Dendritic cell treated with granulocyte-macrophage colony-stimulating factor and Interleukin-4, amounts not matched to agents 40 ng/mL and 50 ng/mL, for 4 days (primary cell): ENCODE measurements at regions of chr1 and their contacts with region 1.

Region 1: DNA sequence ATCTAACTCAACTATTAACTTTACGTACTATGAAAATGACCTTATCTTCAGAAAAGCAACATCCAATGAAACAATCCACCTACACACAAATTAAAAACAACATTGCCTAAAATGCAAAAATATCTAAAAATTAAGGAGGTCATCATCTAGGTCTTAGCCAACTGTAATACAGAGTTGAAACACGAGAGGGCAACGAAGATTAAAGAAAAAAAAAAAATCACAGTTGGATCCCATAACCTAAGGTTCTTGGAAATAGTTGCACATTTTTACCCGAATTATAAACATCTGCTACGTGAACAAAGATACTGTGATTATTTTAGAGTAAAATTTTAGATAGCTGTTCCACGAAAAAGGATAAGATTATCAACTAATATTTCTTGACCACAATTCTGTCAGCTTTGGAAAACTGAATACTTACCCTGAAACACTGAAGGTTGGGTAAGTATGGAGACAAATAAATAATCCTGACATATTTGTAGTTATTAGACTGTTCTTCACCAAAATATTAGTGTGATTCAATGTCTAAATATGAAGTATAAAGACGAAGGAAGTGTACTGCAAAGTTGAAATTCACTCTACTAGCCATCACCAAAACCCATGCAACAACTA is 88.0 kb upstream of the AK4 start:
- H3K4me3 Mint-ChIP-seq: no peak overlapping the region
- H3K27ac Mint-ChIP-seq: no peak overlapping the region
- H3K4me1 Mint-ChIP-seq: peaks cover 55% of the 10 kb centered on the region
- H3K27me3 Mint-ChIP-seq: no peaks in the 10 kb centered on the region

Region 2: DNA sequence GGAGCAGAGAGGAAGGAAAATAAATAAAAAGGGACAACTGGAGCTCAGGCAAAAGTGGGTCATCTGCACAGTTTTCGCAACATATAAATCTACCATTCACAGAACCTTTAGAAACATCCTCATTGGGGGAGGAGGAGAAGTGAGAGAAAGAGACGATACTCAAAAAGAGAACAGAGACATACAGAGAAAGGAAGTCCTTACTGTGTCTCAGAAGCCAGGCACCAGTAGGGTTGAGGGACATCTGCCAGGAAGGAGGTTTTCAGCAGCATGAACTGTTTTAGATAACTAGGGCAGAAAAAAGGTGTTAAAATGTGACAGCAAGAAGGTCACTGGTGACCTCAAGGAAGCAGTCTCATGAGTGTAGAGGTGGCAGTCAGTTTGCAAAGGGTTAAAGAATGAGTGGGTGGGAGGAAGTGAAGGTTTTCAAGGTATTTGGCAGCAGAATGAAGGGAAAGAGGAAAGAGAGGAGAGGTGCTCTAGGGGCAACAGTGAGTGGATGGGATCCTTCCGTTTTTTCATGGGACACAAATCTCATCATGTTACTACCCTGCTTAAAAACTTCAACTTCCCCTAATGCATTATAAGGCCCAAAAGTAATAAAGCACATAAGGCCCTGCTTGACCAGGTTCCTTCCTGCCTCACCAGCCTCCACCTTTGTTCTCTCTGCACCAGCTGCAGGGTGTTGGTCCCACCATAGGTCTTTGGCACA is 103.1 kb before region 1 on chr1:
- intact Hi-C with region 1: loop called (anchors 5 kb)
- H3K4me3 Mint-ChIP-seq: peak overlapping the region; percentile 32
- H3K27ac Mint-ChIP-seq: no peak overlapping the region
- H3K4me1 Mint-ChIP-seq: peaks cover 48% of the 10 kb centered on the region
- H3K27me3 Mint-ChIP-seq: no peaks in the 10 kb centered on the region

Region 3: GRCh38 chr1:65020774-65021173 is 39.3 kb before region 1 on chr1:
- intact Hi-C with region 1: no loop called
- H3K4me3 Mint-ChIP-seq: no peak overlapping the region
- H3K27ac Mint-ChIP-seq: no peak overlapping the region
- H3K4me1 Mint-ChIP-seq: peaks cover 14% of the 10 kb centered on the region
- H3K27me3 Mint-ChIP-seq: no peaks in the 10 kb centered on the region

Region 4: GRCh38 chr1:65075123-65075976 is 15.3 kb after region 1 on chr1:
- intact Hi-C with region 1: loop called (anchors 2 kb)
- H3K4me3 Mint-ChIP-seq: no peak overlapping the region
- H3K27ac Mint-ChIP-seq: no peak overlapping the region
- H3K4me1 Mint-ChIP-seq: peaks cover 26% of the 10 kb centered on the region
- H3K27me3 Mint-ChIP-seq: no peaks in the 10 kb centered on the region

Region 5: GRCh38 chr1:65209005-65209885 is 149.2 kb after region 1 on chr1:
- intact Hi-C with region 1: loop called (anchors 1 kb)
- H3K4me3 Mint-ChIP-seq: no peak overlapping the region
- H3K27ac Mint-ChIP-seq: no peak overlapping the region
- H3K4me1 Mint-ChIP-seq: peaks cover 41% of the 10 kb centered on the region
- H3K27me3 Mint-ChIP-seq: no peaks in the 10 kb centered on the region